CD8-positive, alpha-beta T cell (primary cell): ENCODE measurements at regions of chrX and their contacts with region 1.

Region 1: GRCh38 chrX:140249088-140249487 is 255.8 kb downstream of the SOX3 start:
- DNase-seq: no peak
- ATAC-seq: no peak
- H3K4me3 ChIP-seq: no peak overlapping the region
- H3K4me3 Mint-ChIP-seq: no peak overlapping the region
- H3K27ac ChIP-seq: no peak overlapping the region
- H3K27ac Mint-ChIP-seq: no peak overlapping the region
- H3K4me1 ChIP-seq: no peaks in the 10 kb centered on the region
- H3K4me1 Mint-ChIP-seq: no peaks in the 10 kb centered on the region
- H3K27me3 ChIP-seq: no peaks in the 10 kb centered on the region
- H3K27me3 Mint-ChIP-seq: no peaks in the 10 kb centered on the region
- CTCF ChIP-seq: no peak

Region 2: DNA sequence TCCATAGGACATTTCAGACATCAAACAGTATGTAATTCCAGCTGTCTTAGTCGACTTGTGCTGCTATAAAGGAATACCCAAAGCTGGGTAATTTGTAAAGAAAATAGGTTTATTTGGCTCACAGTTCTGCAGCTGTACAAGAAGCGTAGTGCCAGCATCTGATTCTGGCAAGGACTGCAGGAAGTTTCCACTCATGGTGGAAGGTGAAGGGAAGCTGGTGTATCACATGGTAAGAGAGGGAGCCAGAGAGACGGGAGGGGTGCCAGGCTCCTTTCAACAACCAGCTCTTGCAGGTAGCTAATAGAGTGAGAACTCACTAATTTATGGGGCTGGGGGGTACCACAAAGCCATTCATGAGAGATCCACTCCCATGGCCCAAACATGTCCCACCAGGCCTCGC is 1284.6 kb before region 1 on chrX:
- CTCF ChIA-PET with region 1: no interaction called
- POLR2A ChIA-PET with region 1: no interaction called
- intact Hi-C with region 1: loop called in 1 of 2 experiments (anchors 5 kb)
- DNase-seq: no peak
- ATAC-seq: no peak
- H3K4me3 ChIP-seq: no peak overlapping the region
- H3K4me3 Mint-ChIP-seq: no peak overlapping the region
- H3K27ac ChIP-seq: no peak overlapping the region
- H3K27ac Mint-ChIP-seq: no peak overlapping the region
- H3K4me1 ChIP-seq: no peaks in the 10 kb centered on the region
- H3K4me1 Mint-ChIP-seq: no peaks in the 10 kb centered on the region
- H3K27me3 ChIP-seq: no peaks in the 10 kb centered on the region
- H3K27me3 Mint-ChIP-seq: no peaks in the 10 kb centered on the region
- CTCF ChIP-seq: no peak

Region 3: GRCh38 chrX:139967300-139967699 is 281.8 kb before region 1 on chrX:
- CTCF ChIA-PET with region 1: no interaction called
- POLR2A ChIA-PET with region 1: no interaction called
- intact Hi-C with region 1: no loop called
- DNase-seq: peak in 2 of 9 experiments; percentile 0 to 5
- ATAC-seq: no peak
- H3K4me3 ChIP-seq: no peak overlapping the region
- H3K4me3 Mint-ChIP-seq: no peak overlapping the region
- H3K27ac ChIP-seq: no peak overlapping the region
- H3K27ac Mint-ChIP-seq: no peak overlapping the region
- H3K4me1 ChIP-seq: no peaks in the 10 kb centered on the region
- H3K4me1 Mint-ChIP-seq: peaks cover 2% of the 10 kb centered on the region
- H3K27me3 ChIP-seq: no peaks in the 10 kb centered on the region
- H3K27me3 Mint-ChIP-seq: peaks cover 12% of the 10 kb centered on the region
- CTCF ChIP-seq: no peak